ENCODE measurements at regions of chr4 and their contacts with region 1.

Region 1: GRCh38 chr4:92060333-92060732 is 243.4 kb upstream of the GRID2 start:
- DNase-seq: no peak
- H3K4me3 ChIP-seq: no peak overlapping the region
- H3K27ac ChIP-seq: no peak overlapping the region
- H3K4me1 ChIP-seq: no peaks in the 10 kb centered on the region
- H3K27me3 ChIP-seq: no peaks in the 10 kb centered on the region
- CTCF ChIP-seq: no peak
- EP300 ChIP-seq: no peak
- POLR2A ChIP-seq: no peak

Region 2: GRCh38 chr4:91997045-91997444 is 63.3 kb before region 1 on chr4:
- intact Hi-C with region 1: no loop called
- DNase-seq: no peak
- H3K4me3 ChIP-seq: no peak overlapping the region
- H3K27ac ChIP-seq: no peak overlapping the region
- H3K4me1 ChIP-seq: no peaks in the 10 kb centered on the region
- H3K27me3 ChIP-seq: no peaks in the 10 kb centered on the region
- CTCF ChIP-seq: no peak
- EP300 ChIP-seq: no peak
- POLR2A ChIP-seq: no peak

Region 3: GRCh38 chr4:92091335-92091734 is 31.0 kb after region 1 on chr4:
- intact Hi-C with region 1: loop called in 1 of 4 experiments (anchors 2 kb)
- DNase-seq: no peak
- H3K4me3 ChIP-seq: no peak overlapping the region
- H3K27ac ChIP-seq: no peak overlapping the region
- H3K4me1 ChIP-seq: no peaks in the 10 kb centered on the region
- H3K27me3 ChIP-seq: no peaks in the 10 kb centered on the region
- CTCF ChIP-seq: no peak
- EP300 ChIP-seq: no peak
- POLR2A ChIP-seq: no peak